Endothelial cell of umbilical vein (primary cell): ENCODE measurements at regions of chr2 and their contacts with region 1.

Region 1: DNA sequence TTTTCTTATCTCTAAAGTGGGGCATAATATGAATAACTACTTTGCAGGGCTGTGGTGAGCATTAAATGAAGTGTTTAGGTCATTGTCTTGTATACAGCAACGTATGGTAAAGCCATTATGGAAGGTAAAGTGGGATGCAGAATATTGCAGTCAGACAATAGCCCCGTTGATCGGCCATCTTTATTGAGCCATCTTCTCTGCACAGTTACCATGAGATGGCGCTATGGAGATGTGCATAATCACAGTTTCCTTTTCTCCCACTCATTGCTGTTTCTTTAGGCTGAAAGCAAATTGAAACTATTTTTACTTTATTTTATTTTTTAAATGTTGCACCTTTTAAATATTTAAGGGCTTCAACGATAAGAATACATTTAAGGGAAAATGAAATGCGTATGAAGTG is 108.9 kb downstream of the THSD7B start:
- DNase-seq: peak; percentile 4
- H3K4me3 ChIP-seq: no peak overlapping the region
- H3K27ac ChIP-seq: no peak overlapping the region
- H3K4me1 ChIP-seq: no peaks in the 10 kb centered on the region
- H3K27me3 ChIP-seq: no peaks in the 10 kb centered on the region
- CTCF ChIP-seq: peak in 1 of 2 donors; percentile 31
- POLR2A ChIP-seq: no peak

Region 2: DNA sequence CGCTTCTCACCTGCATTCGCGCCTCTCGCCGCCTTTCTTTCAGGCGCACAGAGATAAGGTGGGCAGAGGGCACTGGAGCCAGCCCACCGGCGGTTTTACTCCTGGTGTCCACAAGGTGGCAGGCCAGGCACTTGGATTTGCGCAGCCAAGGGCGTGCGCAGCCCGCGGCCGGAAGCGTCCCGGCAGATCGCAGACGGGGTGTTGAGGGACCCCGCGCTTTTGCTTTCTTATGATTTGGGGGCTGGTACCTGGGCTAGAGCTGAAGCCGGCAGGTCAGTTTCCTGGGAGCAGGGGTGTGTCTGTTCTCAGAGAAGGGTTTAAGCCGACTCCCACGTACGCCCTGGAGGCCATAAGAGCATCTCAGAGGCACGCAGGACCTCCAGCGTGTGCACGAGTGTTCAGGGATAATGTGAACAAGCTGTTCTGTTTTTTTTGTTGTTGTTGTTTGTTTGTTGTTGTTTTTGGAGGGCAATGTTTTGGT is 450.7 kb before region 1 on chr2:
- CTCF ChIA-PET with region 1: no interaction called
- POLR2A ChIA-PET with region 1: no interaction called
- dilution Hi-C with region 1: no loop called
- intact Hi-C with region 1: loop called (anchors 5 kb)
- DNase-seq: peak; percentile 58
- H3K4me3 ChIP-seq: peak overlapping the region in 1 of 3 experiments; percentile 17
- H3K27ac ChIP-seq: no peak overlapping the region
- H3K4me1 ChIP-seq: no peaks in the 10 kb centered on the region
- H3K27me3 ChIP-seq: peaks cover 5 to 6% of the 10 kb centered on the region in 2 experiments
- CTCF ChIP-seq: peak; percentile 80 to 87
- POLR2A ChIP-seq: no peak

Region 3: GRCh38 chr2:136932700-136933099 is 58.4 kb after region 1 on chr2:
- CTCF ChIA-PET with region 1: interaction called, 8 read pairs
- POLR2A ChIA-PET with region 1: no interaction called
- dilution Hi-C with region 1: no loop called
- intact Hi-C with region 1: loop called (anchors 5 kb)
- DNase-seq: peak; percentile 5
- H3K4me3 ChIP-seq: no peak overlapping the region
- H3K27ac ChIP-seq: no peak overlapping the region
- H3K4me1 ChIP-seq: no peaks in the 10 kb centered on the region
- H3K27me3 ChIP-seq: no peaks in the 10 kb centered on the region
- CTCF ChIP-seq: no peak
- POLR2A ChIP-seq: no peak

Region 4: GRCh38 chr2:137467246-137467862 is 593.1 kb after region 1 on chr2:
- CTCF ChIA-PET with region 1: interaction called, 3 read pairs
- POLR2A ChIA-PET with region 1: no interaction called
- dilution Hi-C with region 1: no loop called
- intact Hi-C with region 1: loop called (anchors 10 kb)
- DNase-seq: peak; percentile 3
- H3K4me3 ChIP-seq: no peak overlapping the region
- H3K27ac ChIP-seq: no peak overlapping the region
- H3K4me1 ChIP-seq: no peaks in the 10 kb centered on the region
- H3K27me3 ChIP-seq: no peaks in the 10 kb centered on the region
- CTCF ChIP-seq: peak in 1 of 2 donors; percentile 19
- POLR2A ChIP-seq: no peak